Caco-2 (cell line): ENCODE measurements at regions of chr10 and their contacts with region 1.

Region 1: GRCh38 chr10:64617085-64617484 is 1095.9 kb downstream of the REEP3 start:
- DNase-seq: peak in 1 of 2 experiments; percentile 41
- H3K4me3 ChIP-seq: no peak overlapping the region
- H3K4me3 Mint-ChIP-seq: peak overlapping the region; percentile 50
- H3K27ac Mint-ChIP-seq: peak overlapping the region; percentile 72
- H3K4me1 ChIP-seq: peaks cover 16% of the 10 kb centered on the region
- H3K4me1 Mint-ChIP-seq: peaks cover 23% of the 10 kb centered on the region
- H3K27me3 ChIP-seq: no peaks in the 10 kb centered on the region
- H3K27me3 Mint-ChIP-seq: peaks cover 3% of the 10 kb centered on the region
- CTCF ChIP-seq: no peak

Region 2: GRCh38 chr10:63409465-63410027 is 1207.5 kb before region 1 on chr10:
- CTCF ChIA-PET with region 1: no interaction called
- POLR2A ChIA-PET with region 1: no interaction called
- intact Hi-C with region 1: no loop called
- DNase-seq: no peak
- H3K4me3 ChIP-seq: no peak overlapping the region
- H3K4me3 Mint-ChIP-seq: no peak overlapping the region
- H3K27ac Mint-ChIP-seq: no peak overlapping the region
- H3K4me1 ChIP-seq: 0 out of 2 replicates have a peak, but pooled peaks cover 4% of the 10 kb centered on the region
- H3K4me1 Mint-ChIP-seq: peaks cover 25% of the 10 kb centered on the region
- H3K27me3 ChIP-seq: no peaks in the 10 kb centered on the region
- H3K27me3 Mint-ChIP-seq: no peaks in the 10 kb centered on the region
- CTCF ChIP-seq: no peak

Region 3: GRCh38 chr10:64574374-64574773 is 42.7 kb before region 1 on chr10:
- CTCF ChIA-PET with region 1: no interaction called
- POLR2A ChIA-PET with region 1: no interaction called
- intact Hi-C with region 1: loop called (anchors 1 kb)
- DNase-seq: no peak
- H3K4me3 ChIP-seq: no peak overlapping the region
- H3K4me3 Mint-ChIP-seq: no peak overlapping the region
- H3K27ac Mint-ChIP-seq: no peak overlapping the region
- H3K4me1 ChIP-seq: peaks cover 20% of the 10 kb centered on the region
- H3K4me1 Mint-ChIP-seq: peaks cover 11% of the 10 kb centered on the region
- H3K27me3 ChIP-seq: no peaks in the 10 kb centered on the region
- H3K27me3 Mint-ChIP-seq: no peaks in the 10 kb centered on the region
- CTCF ChIP-seq: no peak

Region 4: DNA sequence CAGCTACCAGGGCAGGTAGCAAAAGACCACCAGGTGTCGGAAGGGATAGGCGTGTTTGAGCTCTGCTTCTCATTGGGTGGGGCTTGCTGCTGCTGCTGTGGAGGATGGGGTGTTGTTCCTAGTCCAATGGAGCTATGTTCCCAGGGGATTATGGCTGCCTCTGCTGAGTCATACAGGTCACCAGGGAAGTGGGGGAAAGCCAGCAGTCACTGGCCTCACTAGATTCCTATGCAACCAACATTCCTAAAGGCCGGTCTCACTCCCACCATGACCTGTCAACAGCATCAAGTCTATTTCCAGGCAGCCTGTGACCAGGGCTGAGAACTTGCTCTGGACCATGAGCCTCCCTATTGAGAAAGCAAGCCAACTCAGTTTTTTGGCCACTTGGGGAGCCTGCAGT is 65.0 kb after region 1 on chr10:
- CTCF ChIA-PET with region 1: no interaction called
- POLR2A ChIA-PET with region 1: no interaction called
- intact Hi-C with region 1: no loop called
- DNase-seq: no peak
- H3K4me3 ChIP-seq: no peak overlapping the region
- H3K4me3 Mint-ChIP-seq: no peak overlapping the region
- H3K27ac Mint-ChIP-seq: no peak overlapping the region
- H3K4me1 ChIP-seq: peaks cover 4% of the 10 kb centered on the region
- H3K4me1 Mint-ChIP-seq: no peaks in the 10 kb centered on the region
- H3K27me3 ChIP-seq: no peaks in the 10 kb centered on the region
- H3K27me3 Mint-ChIP-seq: no peaks in the 10 kb centered on the region
- CTCF ChIP-seq: no peak